CD14-positive monocyte (primary cell): ENCODE measurements at regions of chr7 and their contacts with region 1.

Region 1: DNA sequence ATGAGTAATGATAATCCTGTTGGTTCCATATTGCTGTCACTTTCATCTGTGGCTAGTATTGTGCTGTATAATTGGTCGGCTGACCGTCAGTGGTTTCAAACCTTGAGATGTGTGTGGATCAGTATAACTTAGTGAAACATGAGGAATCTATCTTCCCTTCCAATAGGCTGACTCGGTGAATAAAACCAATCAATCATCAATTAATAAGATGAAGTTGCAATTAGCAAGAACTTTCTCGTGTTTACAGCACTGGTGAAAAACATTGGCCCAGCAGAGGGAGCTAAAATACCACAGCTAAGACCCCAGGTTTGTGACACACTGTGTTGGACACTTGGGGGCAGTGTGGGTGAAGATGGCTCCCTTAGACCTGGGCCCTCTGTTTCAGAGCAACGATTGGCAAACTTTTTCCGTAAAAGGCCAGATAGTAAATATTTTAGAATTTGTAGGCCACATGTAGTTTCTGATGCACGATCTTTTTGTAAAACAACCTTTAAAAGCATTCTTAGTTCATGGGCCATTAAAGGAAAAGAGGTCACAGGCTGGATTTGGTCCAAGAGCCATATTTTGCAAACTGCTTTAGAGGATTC is 47.8 kb downstream of the STRA8 start:
- DNase-seq: peak; percentile 48 to 64 (median 62)
- H3K4me3 ChIP-seq: no peak overlapping the region
- H3K4me3 Mint-ChIP-seq: peak overlapping the region in 1 of 2 donors; percentile 36
- H3K27ac ChIP-seq: no peak overlapping the region
- H3K27ac Mint-ChIP-seq: no peak overlapping the region
- H3K4me1 ChIP-seq: no peaks in the 10 kb centered on the region
- H3K4me1 Mint-ChIP-seq: peaks cover 5% of the 10 kb centered on the region
- H3K27me3 ChIP-seq: peaks cover 2 to 3% of the 10 kb centered on the region in 2 donors
- H3K27me3 Mint-ChIP-seq: peaks cover 1 to 6% (median 4%) of the 10 kb centered on the region in 3 donors
- CTCF ChIP-seq: peak; percentile 91

Region 2: DNA sequence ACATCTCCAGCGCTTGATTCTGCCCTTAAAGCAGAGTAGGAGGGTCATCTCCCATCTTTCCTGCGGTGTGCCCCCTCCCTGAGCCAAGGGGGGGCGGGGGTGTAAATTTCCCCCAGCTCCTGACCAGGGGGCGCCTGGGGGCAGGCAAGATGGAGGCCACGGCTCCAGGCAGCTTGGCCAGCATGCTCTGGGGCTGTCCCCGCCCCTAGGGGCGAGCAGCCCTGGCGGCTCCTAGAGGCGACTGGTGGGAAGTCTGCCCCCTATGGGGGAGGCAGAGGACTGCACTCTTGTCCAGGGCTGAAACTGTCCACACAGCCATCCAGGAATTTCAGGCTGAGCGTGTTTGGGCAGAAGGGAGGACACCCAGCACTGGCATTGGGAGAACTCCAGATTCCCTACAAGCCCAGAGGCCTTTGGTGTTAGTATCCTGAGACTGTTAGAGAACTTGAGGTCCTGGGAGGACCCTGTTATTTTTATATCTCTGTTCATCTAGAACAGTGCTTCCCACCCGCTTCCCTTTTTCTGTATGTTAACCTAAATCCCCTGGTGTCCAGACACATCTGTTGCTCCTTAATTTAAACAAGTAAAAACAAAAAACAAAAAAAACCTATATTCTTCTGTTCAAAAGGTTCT is 43.2 kb before region 1 on chr7:
- intact Hi-C with region 1: no loop called
- DNase-seq: no peak
- H3K4me3 ChIP-seq: no peak overlapping the region
- H3K4me3 Mint-ChIP-seq: no peak overlapping the region
- H3K27ac ChIP-seq: no peak overlapping the region
- H3K27ac Mint-ChIP-seq: no peak overlapping the region
- H3K4me1 ChIP-seq: no peaks in the 10 kb centered on the region
- H3K4me1 Mint-ChIP-seq: peaks cover 5% of the 10 kb centered on the region
- H3K27me3 ChIP-seq: no peaks in the 10 kb centered on the region
- H3K27me3 Mint-ChIP-seq: peaks cover 2 to 7% (median 2%) of the 10 kb centered on the region in 3 donors
- CTCF ChIP-seq: peak; percentile 54

Region 3: GRCh38 chr7:135645296-135645904 is 363.9 kb after region 1 on chr7:
- intact Hi-C with region 1: loop called (anchors 5 to 10 kb)
- DNase-seq: peak in 2 of 3 donors; percentile 27 to 46
- H3K4me3 ChIP-seq: no peak overlapping the region
- H3K4me3 Mint-ChIP-seq: no peak overlapping the region
- H3K27ac ChIP-seq: no peak overlapping the region
- H3K27ac Mint-ChIP-seq: peak overlapping the region in 1 of 7 donors; percentile 74
- H3K4me1 ChIP-seq: no peaks in the 10 kb centered on the region
- H3K4me1 Mint-ChIP-seq: no peaks in the 10 kb centered on the region
- H3K27me3 ChIP-seq: no peaks in the 10 kb centered on the region
- H3K27me3 Mint-ChIP-seq: no peaks in the 10 kb centered on the region
- CTCF ChIP-seq: peak; percentile 85